K562 (cell line): ENCODE measurements at regions of chr21 and their contacts with region 1.

Region 1: GRCh38 chr21:42449296-42449927 is 45.7 kb downstream of the UBASH3A start:
- DNase-seq: no peak
- ATAC-seq: no peak
- H3K4me3 ChIP-seq: no peak overlapping the region
- H3K27ac ChIP-seq: no peak overlapping the region
- H3K4me1 ChIP-seq: peaks cover 0 to 8% of the 10 kb centered on the region in 2 experiments; a peak in 2 of 5 replicates
- H3K27me3 ChIP-seq: peaks cover 7 to 57% of the 10 kb centered on the region in 2 experiments; a peak in 4 of 5 replicates
- CTCF ChIP-seq: no peak
- EP300 ChIP-seq: no peak
- POLR2A ChIP-seq: no peak
- RAD21 ChIP-seq: no peak

Region 2: GRCh38 chr21:42145569-42146272 is 303.7 kb before region 1 on chr21:
- CTCF ChIA-PET with region 1: interaction called, 27 read pairs
- POLR2A ChIA-PET with region 1: no interaction called
- in situ Hi-C with region 1: no loop called
- intact Hi-C with region 1: loop called (anchors 5 kb)
- DNase-seq: peak; percentile 68 to 88 (median 86)
- ATAC-seq: peak; percentile 84
- H3K4me3 ChIP-seq: no peak overlapping the region
- H3K27ac ChIP-seq: no peak overlapping the region
- H3K4me1 ChIP-seq: peaks cover 0 to 8% of the 10 kb centered on the region in 2 experiments; a peak in 2 of 5 replicates
- H3K27me3 ChIP-seq: peaks cover 25 to 65% of the 10 kb centered on the region in 2 experiments; a peak in 4 of 5 replicates
- CTCF ChIP-seq: peak; percentile 88 to 94 (median 93)
- EP300 ChIP-seq: no peak
- POLR2A ChIP-seq: no peak
- RAD21 ChIP-seq: peak; percentile 81 to 92

Region 3: GRCh38 chr21:42156690-42157577 is 292.5 kb before region 1 on chr21:
- CTCF ChIA-PET with region 1: no interaction called
- POLR2A ChIA-PET with region 1: interaction called, 3 read pairs
- in situ Hi-C with region 1: loop called (anchors 5 kb)
- intact Hi-C with region 1: no loop called
- DNase-seq: no peak
- ATAC-seq: no peak; the same call in 2 of the 3 replicates
- H3K4me3 ChIP-seq: no peak overlapping the region
- H3K27ac ChIP-seq: no peak overlapping the region
- H3K4me1 ChIP-seq: no peaks in the 10 kb centered on the region
- H3K27me3 ChIP-seq: peaks cover 20 to 55% of the 10 kb centered on the region in 2 experiments; a peak in 4 of 5 replicates
- CTCF ChIP-seq: no peak
- EP300 ChIP-seq: no peak
- POLR2A ChIP-seq: no peak
- RAD21 ChIP-seq: no peak

Region 4: GRCh38 chr21:42309753-42310221 is 139.6 kb before region 1 on chr21:
- CTCF ChIA-PET with region 1: interaction called, 33 read pairs
- POLR2A ChIA-PET with region 1: no interaction called
- in situ Hi-C with region 1: loop called (anchors 10 kb)
- intact Hi-C with region 1: loop called (anchors 1 kb)
- DNase-seq: peak; percentile 65 to 87 (median 83)
- ATAC-seq: peak; percentile 88
- H3K4me3 ChIP-seq: no peak overlapping the region
- H3K27ac ChIP-seq: no peak overlapping the region
- H3K4me1 ChIP-seq: peaks cover 0 to 13% of the 10 kb centered on the region in 2 experiments; a peak in 2 of 5 replicates
- H3K27me3 ChIP-seq: peaks cover 39 to 93% of the 10 kb centered on the region in 2 experiments; a peak in 4 of 5 replicates
- CTCF ChIP-seq: peak; percentile 84 to 91 (median 89)
- EP300 ChIP-seq: no peak
- POLR2A ChIP-seq: no peak
- RAD21 ChIP-seq: peak; percentile 64 to 74

Region 5: GRCh38 chr21:42376338-42376982 is 73.0 kb before region 1 on chr21:
- CTCF ChIA-PET with region 1: interaction called, 13 read pairs
- POLR2A ChIA-PET with region 1: no interaction called
- in situ Hi-C with region 1: loop called (anchors 5 kb)
- intact Hi-C with region 1: loop called (anchors 1 kb)
- DNase-seq: peak; percentile 58 to 80 (median 78)
- ATAC-seq: peak; percentile 90
- H3K4me3 ChIP-seq: no peak overlapping the region
- H3K27ac ChIP-seq: no peak overlapping the region
- H3K4me1 ChIP-seq: peaks cover 3 to 19% of the 10 kb centered on the region in 2 experiments; a peak in 3 of 5 replicates
- H3K27me3 ChIP-seq: peaks cover 21 to 69% of the 10 kb centered on the region in 2 experiments; a peak in 4 of 5 replicates
- CTCF ChIP-seq: peak; percentile 78 to 82 (median 81)
- EP300 ChIP-seq: no peak
- POLR2A ChIP-seq: no peak
- RAD21 ChIP-seq: peak; percentile 42 to 72; a peak in 3 of 4 replicates

Region 6: GRCh38 chr21:42799516-42799915 is 350.1 kb after region 1 on chr21:
- CTCF ChIA-PET with region 1: no interaction called
- POLR2A ChIA-PET with region 1: no interaction called
- in situ Hi-C with region 1: no loop called
- intact Hi-C with region 1: no loop called
- DNase-seq: no peak
- ATAC-seq: no peak
- H3K4me3 ChIP-seq: no peak overlapping the region
- H3K27ac ChIP-seq: no peak overlapping the region
- H3K4me1 ChIP-seq: no peaks in the 10 kb centered on the region; a peak in 2 of 5 replicates
- H3K27me3 ChIP-seq: peaks cover 37 to 41% of the 10 kb centered on the region in 2 experiments
- CTCF ChIP-seq: no peak
- EP300 ChIP-seq: no peak
- POLR2A ChIP-seq: no peak
- RAD21 ChIP-seq: no peak